ENCODE measurements at regions of chr3 and their contacts with region 1.

Region 1: DNA sequence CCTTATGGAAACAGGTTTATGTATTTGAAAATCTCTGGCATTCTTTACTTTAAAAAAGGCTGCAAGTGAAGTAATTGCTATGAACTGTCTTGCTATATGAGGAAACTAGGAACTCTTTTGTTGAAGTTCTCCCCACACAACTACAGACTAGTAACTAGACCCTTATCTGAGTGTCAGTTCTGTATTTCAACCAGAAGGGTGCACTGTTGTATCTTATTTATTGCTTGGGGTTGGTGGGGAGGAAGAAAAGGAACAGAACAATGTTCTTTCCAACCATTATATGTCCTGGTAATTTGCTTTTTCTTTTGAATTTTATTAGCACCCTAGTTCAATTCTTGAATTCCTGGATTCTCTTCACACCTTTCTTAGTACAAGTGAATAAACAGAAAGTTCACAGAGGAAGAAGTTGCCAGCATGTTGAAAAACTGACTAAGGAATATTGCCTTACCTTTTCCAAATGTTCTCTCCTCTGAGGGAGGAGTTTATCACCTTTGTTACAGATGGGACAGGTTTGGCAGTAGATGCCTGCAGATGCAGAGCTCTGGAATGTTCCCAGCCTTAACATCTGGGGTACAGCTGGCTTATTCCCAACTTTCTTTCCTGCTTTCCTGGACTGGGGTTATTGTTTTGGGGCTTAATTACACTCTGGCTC is 162.4 kb upstream of the CFAP20DC start:
- DNase-seq: peak in 3 of 14 experiments; percentile 60 to 65 (median 64)
- ATAC-seq: peak; percentile 68
- H3K4me3 ChIP-seq: no peak overlapping the region
- H3K4me3 Mint-ChIP-seq: no peak overlapping the region
- H3K27ac ChIP-seq: no peak overlapping the region
- H3K27ac Mint-ChIP-seq: no peak overlapping the region
- H3K4me1 ChIP-seq: no peaks in the 10 kb centered on the region
- H3K4me1 Mint-ChIP-seq: no peaks in the 10 kb centered on the region
- H3K27me3 ChIP-seq: peaks cover 0 to 11% of the 10 kb centered on the region in 2 experiments
- H3K27me3 Mint-ChIP-seq: peaks cover 8% of the 10 kb centered on the region
- CTCF ChIP-seq: peak; percentile 82

Region 2: DNA sequence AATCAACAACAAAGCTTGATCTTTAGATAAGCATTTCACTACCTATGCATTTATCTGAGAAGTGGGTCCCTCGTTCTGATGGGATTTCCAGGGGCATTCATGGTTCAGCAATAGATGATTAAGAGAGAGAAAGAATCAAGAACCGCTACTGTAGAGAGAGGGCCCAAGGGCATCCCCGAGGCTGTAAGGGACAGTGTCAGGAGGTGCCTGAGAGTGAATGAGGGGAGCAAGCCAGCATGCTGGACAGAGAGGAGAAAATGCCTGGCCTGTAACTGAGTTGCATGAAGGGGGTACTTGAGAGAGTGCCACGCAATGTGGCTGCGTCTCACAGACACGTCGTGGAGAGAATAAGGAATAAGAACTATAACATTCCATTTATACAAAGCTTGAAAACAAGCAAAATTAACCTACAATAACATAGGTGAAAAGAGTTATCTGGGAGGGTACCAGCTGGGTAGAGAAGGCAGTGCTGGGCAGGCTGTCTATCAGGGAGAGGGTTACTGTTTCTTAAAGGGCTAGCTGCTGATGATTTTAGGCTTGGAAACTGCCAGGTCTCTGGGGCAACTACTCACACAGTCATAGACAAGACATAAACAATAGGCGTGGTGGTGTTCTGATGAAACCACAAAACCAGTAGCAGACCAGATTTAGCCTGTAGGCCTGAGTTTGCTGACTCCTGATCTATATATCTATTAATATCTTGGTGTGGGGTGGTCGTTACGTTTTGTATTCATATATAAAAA is 212.2 kb after region 1 on chr3:
- CTCF ChIA-PET with region 1: no interaction called
- POLR2A ChIA-PET with region 1: no interaction called
- intact Hi-C with region 1: loop called in 1 of 2 experiments (anchors 1 kb)
- DNase-seq: peak in 10 of 14 experiments; percentile 5 to 83 (median 31)
- ATAC-seq: peak; percentile 65
- H3K4me3 ChIP-seq: no peak overlapping the region
- H3K4me3 Mint-ChIP-seq: peak overlapping the region; percentile 54
- H3K27ac ChIP-seq: no peak overlapping the region
- H3K27ac Mint-ChIP-seq: peak overlapping the region; percentile 93
- H3K4me1 ChIP-seq: peaks cover 44% of the 10 kb centered on the region
- H3K4me1 Mint-ChIP-seq: peaks cover 65% of the 10 kb centered on the region
- H3K27me3 ChIP-seq: no peaks in the 10 kb centered on the region
- H3K27me3 Mint-ChIP-seq: no peaks in the 10 kb centered on the region
- CTCF ChIP-seq: no peak

Region 3: DNA sequence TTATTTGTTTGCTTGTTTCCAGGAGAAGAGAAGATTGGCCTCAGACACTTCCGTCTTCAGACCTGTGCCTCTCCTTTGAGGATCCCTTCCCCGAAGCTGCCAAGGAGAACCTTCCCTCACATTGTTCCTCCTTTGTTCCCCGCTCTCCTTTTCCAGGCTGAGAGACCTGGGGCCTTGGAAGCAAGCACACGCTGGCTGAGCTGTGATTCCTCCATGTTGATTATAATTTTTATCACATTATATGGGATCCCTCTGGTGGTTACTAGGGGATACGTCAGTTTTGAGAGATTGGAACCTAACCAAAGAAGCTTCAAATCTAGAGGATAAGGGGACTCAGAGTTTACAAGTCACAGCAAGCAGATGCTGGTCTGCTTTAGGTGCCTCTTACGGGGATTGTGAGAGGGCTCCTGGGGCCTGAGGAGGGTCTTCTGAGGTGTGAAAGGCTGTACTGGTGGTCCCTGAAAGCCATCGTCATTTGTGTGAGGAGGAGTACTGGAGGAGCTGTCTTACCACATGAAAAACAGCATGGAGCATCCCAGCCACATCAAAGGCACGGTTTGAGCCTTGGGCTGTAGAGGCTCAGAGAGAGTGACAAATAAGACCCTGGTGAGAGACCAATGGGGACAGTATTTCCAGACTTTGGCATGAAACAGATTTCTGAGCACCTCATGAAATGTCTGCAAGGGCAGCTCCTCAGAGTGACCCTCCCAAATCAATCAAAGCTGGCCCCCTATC is 597.6 kb after region 1 on chr3:
- CTCF ChIA-PET with region 1: no interaction called
- POLR2A ChIA-PET with region 1: no interaction called
- intact Hi-C with region 1: loop called in 1 of 2 experiments (anchors 1 kb)
- DNase-seq: peak in 3 of 14 experiments; percentile 14 to 23 (median 19)
- ATAC-seq: no peak
- H3K4me3 ChIP-seq: no peak overlapping the region
- H3K4me3 Mint-ChIP-seq: no peak overlapping the region
- H3K27ac ChIP-seq: no peak overlapping the region
- H3K27ac Mint-ChIP-seq: no peak overlapping the region
- H3K4me1 ChIP-seq: no peaks in the 10 kb centered on the region
- H3K4me1 Mint-ChIP-seq: peaks cover 34% of the 10 kb centered on the region
- H3K27me3 ChIP-seq: no peaks in the 10 kb centered on the region
- H3K27me3 Mint-ChIP-seq: no peaks in the 10 kb centered on the region
- CTCF ChIP-seq: no peak

Region 4: DNA sequence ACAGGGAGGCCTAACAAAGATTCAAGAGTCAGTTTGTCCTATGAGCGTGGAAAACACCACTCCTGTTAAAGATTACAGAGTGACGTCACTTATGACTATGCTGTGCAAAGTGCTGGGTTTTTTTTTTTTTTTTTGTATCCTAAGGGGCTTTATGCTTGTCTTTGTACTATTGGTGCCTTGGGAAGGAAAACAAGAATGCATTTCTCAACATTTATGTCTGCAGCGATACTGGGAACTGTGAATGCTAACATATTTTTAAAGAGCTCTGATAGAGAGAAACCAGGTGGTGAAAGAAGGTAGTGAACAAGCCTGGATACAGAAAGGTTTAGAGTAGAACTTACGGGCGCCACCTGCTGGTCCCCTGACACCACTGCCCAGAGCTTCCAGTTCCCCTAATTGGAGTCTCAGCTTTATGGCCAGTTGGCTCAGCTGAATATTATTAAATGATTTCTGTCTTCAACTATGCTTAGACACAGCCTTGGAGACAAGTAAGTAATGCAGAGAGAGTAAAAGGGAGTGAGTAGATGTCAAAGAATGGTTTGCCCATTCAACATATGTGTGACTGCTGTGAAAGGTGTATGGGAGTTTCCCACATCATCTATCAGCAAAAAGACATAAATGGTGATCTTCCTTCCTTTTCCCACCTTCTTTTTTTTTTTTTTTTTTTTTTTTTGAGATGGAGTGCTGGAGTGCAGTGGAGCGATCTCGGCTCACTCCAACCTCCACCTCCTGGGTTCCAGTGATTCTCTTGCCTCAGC is 645.5 kb after region 1 on chr3:
- CTCF ChIA-PET with region 1: interaction called, 5 read pairs
- POLR2A ChIA-PET with region 1: no interaction called
- intact Hi-C with region 1: loop called (anchors 1 to 2 kb)
- DNase-seq: peak; percentile 57 to 87 (median 68)
- ATAC-seq: peak; percentile 95
- H3K4me3 ChIP-seq: no peak overlapping the region
- H3K4me3 Mint-ChIP-seq: peak overlapping the region; percentile 6
- H3K27ac ChIP-seq: no peak overlapping the region
- H3K27ac Mint-ChIP-seq: peak overlapping the region; percentile 17
- H3K4me1 ChIP-seq: peaks cover 2% of the 10 kb centered on the region
- H3K4me1 Mint-ChIP-seq: peaks cover 30% of the 10 kb centered on the region
- H3K27me3 ChIP-seq: no peaks in the 10 kb centered on the region
- H3K27me3 Mint-ChIP-seq: no peaks in the 10 kb centered on the region
- CTCF ChIP-seq: peak; percentile 84

Region 5: DNA sequence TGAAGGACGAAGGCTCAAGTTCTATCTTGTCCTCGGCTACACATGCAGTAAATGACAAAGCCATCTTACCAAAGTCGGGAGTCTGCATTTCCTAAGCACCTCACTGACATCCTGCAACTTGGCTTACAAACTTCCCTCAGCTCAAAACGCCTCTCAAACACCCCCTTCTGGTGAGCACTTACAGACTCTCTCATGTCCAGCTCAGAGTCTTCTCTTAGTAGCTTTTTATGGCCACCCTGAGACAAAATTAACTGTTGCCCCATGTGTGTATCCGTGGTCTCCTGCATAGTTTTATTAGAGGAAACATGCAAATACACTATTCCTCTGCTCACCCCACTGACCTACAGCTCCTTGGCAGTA is 1219.3 kb after region 1 on chr3:
- CTCF ChIA-PET with region 1: no interaction called
- POLR2A ChIA-PET with region 1: no interaction called
- intact Hi-C with region 1: loop called in 1 of 2 experiments (anchors 10 kb)
- DNase-seq: peak in 4 of 14 experiments; percentile 17 to 29 (median 26)
- ATAC-seq: no peak
- H3K4me3 ChIP-seq: no peak overlapping the region
- H3K4me3 Mint-ChIP-seq: no peak overlapping the region
- H3K27ac ChIP-seq: no peak overlapping the region
- H3K27ac Mint-ChIP-seq: no peak overlapping the region
- H3K4me1 ChIP-seq: no peaks in the 10 kb centered on the region
- H3K4me1 Mint-ChIP-seq: peaks cover 25% of the 10 kb centered on the region
- H3K27me3 ChIP-seq: no peaks in the 10 kb centered on the region
- H3K27me3 Mint-ChIP-seq: no peaks in the 10 kb centered on the region
- CTCF ChIP-seq: no peak

Region 6: DNA sequence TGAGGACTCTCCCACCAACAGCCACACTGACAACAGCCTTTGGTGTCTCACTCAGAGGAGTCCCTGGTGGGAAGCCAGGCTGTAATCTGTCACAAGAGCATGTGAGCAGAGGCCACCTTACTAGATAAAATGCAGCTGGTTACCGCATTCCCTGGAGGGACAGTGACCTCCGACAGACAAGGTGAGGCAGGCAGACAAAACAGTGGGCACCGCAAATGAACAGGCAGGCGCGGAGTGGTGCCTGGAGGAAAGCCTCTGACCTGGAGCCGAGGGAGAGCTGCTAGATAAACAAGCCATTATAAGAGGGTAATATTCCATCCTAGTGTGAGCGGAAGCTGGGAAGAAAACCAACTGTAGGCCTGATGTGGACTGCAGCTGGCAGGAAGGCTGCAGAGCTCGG is 1302.6 kb after region 1 on chr3:
- CTCF ChIA-PET with region 1: no interaction called
- POLR2A ChIA-PET with region 1: no interaction called
- intact Hi-C with region 1: no loop called
- DNase-seq: no peak
- ATAC-seq: no peak
- H3K4me3 ChIP-seq: no peak overlapping the region
- H3K4me3 Mint-ChIP-seq: no peak overlapping the region
- H3K27ac ChIP-seq: no peak overlapping the region
- H3K27ac Mint-ChIP-seq: no peak overlapping the region
- H3K4me1 ChIP-seq: no peaks in the 10 kb centered on the region
- H3K4me1 Mint-ChIP-seq: peaks cover 12% of the 10 kb centered on the region
- H3K27me3 ChIP-seq: no peaks in the 10 kb centered on the region
- H3K27me3 Mint-ChIP-seq: no peaks in the 10 kb centered on the region
- CTCF ChIP-seq: no peak

Region 7: DNA sequence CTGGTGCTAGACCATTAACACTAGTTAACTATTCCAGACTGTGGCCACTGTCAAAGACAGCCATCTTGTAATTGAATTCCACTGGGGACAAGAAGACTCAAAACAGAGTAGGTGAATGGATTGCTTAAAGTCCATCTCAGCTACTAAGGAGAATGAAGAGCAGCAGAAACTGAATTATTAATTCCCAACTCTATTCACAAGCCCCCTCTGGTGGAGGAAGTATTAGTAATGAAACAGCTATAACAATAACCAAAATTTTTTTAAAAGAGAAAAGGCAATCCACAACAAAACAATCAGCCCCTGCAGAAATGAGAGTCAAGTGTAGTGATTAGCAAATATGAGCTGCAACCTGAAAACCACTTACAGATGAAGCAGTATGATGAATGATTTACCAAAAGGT is 1736.2 kb after region 1 on chr3:
- CTCF ChIA-PET with region 1: no interaction called
- POLR2A ChIA-PET with region 1: no interaction called
- intact Hi-C with region 1: loop called in 1 of 2 experiments (anchors 10 kb)
- DNase-seq: peak in 1 of 14 experiments; percentile 2
- ATAC-seq: no peak
- H3K4me3 ChIP-seq: no peak overlapping the region
- H3K4me3 Mint-ChIP-seq: no peak overlapping the region
- H3K27ac ChIP-seq: no peak overlapping the region
- H3K27ac Mint-ChIP-seq: no peak overlapping the region
- H3K4me1 ChIP-seq: no peaks in the 10 kb centered on the region
- H3K4me1 Mint-ChIP-seq: no peaks in the 10 kb centered on the region
- H3K27me3 ChIP-seq: no peaks in the 10 kb centered on the region
- H3K27me3 Mint-ChIP-seq: no peaks in the 10 kb centered on the region
- CTCF ChIP-seq: no peak

Measured in CD4-positive, alpha-beta T cell (primary cell).